HCT116 (cell line): ENCODE measurements at regions of chr4 and their contacts with region 1.

Region 1: DNA sequence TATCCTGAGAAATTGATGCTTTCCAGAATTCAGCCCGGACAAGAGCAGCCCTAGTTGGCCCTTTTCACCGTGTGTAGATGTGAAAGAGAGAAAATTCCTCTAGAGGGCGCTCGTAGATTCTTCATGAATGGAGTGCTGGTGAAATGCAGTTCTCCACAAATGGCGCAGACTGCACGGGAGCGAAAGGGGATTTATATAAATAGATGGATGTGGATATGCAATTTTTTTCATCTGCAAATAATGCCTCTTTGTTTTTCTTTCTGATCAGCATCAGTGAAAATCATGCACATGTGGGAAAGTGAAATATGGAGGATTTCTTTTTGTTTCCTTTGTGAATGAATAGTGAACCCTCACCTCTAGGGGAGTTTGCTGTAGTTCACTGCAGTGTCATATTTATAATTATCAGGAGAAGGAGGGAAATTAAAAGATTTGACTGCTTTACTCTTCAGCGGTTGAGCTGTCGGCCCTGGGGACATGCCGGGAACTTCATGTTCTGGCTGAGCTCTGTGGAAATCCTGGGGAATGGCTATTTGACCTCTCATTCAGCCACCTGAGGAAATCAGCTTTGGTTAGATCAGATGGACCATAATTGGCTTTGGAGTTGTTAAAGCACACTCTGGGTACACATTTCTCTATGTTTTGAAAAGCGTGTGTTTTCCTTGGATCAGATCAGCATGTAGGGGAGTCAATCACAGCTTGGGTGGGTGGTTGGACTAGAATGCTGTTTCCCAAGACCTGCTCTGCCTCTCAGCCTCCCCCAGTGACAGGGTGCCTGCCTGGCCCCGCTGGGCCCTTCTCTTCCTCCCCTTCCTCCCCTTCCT is 115.0 kb upstream of the SHISA3 start:
- DNase-seq: peak; percentile 76
- ATAC-seq: peak; percentile 90
- H3K4me3 ChIP-seq: no peak overlapping the region; a peak in 1 of 4 replicates
- H3K27ac ChIP-seq: no peak overlapping the region
- H3K4me1 ChIP-seq: peaks cover 0 to 7% of the 10 kb centered on the region in 2 experiments; a peak in 1 of 4 replicates
- H3K27me3 ChIP-seq: no peaks in the 10 kb centered on the region
- CTCF ChIP-seq: peak; percentile 56 to 85 (median 81)
- POLR2A ChIP-seq: no peak
- RAD21 ChIP-seq: peak; percentile 85

Region 2: DNA sequence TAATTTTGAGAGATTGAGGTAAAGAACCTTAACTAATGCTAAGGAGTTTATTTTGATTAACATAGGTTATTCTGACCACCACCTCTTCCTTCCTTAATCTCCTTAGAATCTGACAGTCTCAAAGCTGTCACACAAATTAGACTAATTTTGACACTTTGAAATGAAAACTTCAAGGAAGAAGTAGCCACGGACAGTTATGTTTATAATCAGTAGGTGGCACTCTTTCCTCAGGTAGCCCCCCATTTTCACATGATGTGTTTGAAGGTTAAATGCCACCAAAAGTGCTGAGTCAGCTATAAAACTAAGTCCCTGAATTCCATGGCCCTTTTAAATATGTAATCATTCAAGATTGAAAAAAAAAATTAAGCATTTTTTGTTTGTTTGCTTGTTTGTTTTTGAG is 324.7 kb before region 1 on chr4:
- CTCF ChIA-PET with region 1: no interaction called
- POLR2A ChIA-PET with region 1: no interaction called
- RAD21 ChIA-PET with region 1: no interaction called
- intact Hi-C with region 1: loop called (anchors 2 kb)
- DNase-seq: peak; percentile 24
- ATAC-seq: peak; percentile 59; the same call in 1 of the 2 replicates
- H3K4me3 ChIP-seq: no peak overlapping the region
- H3K27ac ChIP-seq: no peak overlapping the region
- H3K4me1 ChIP-seq: no peaks in the 10 kb centered on the region
- H3K27me3 ChIP-seq: no peaks in the 10 kb centered on the region
- CTCF ChIP-seq: peak; percentile 30 to 64 (median 51); a peak in 5 of 6 replicates
- POLR2A ChIP-seq: no peak
- RAD21 ChIP-seq: peak; percentile 63

Region 3: GRCh38 chr4:41990365-41991111 is 291.8 kb before region 1 on chr4 and contains the start of gene SLC30A9:
- CTCF ChIA-PET with region 1: interaction called, 3 read pairs
- POLR2A ChIA-PET with region 1: no interaction called
- RAD21 ChIA-PET with region 1: no interaction called
- intact Hi-C with region 1: loop called (anchors 5 kb)
- DNase-seq: peak; percentile 92
- ATAC-seq: peak; percentile 94
- H3K4me3 ChIP-seq: peak within 1 kb of the TSS; percentile 93 to 99
- H3K27ac ChIP-seq: peak within 1 kb of the TSS; percentile 55
- H3K4me1 ChIP-seq: peaks cover 0 to 13% of the 10 kb centered on the region in 2 experiments; a peak in 2 of 4 replicates
- H3K27me3 ChIP-seq: no peaks in the 10 kb centered on the region
- CTCF ChIP-seq: peak in 2 of 3 experiments; percentile 22 to 30; a peak in 2 of 6 replicates
- POLR2A ChIP-seq: peak; percentile 68
- RAD21 ChIP-seq: no peak
- total RNA-seq, gene SLC30A9: 67.4 TPM

Region 4: GRCh38 chr4:42442601-42443000 is 160.3 kb after region 1 on chr4:
- CTCF ChIA-PET with region 1: no interaction called
- POLR2A ChIA-PET with region 1: no interaction called
- RAD21 ChIA-PET with region 1: no interaction called
- intact Hi-C with region 1: no loop called
- DNase-seq: no peak
- ATAC-seq: no peak
- H3K4me3 ChIP-seq: no peak overlapping the region
- H3K27ac ChIP-seq: no peak overlapping the region
- H3K4me1 ChIP-seq: no peaks in the 10 kb centered on the region
- H3K27me3 ChIP-seq: peaks cover 30% of the 10 kb centered on the region
- CTCF ChIP-seq: no peak
- POLR2A ChIP-seq: no peak
- RAD21 ChIP-seq: no peak

Region 5: DNA sequence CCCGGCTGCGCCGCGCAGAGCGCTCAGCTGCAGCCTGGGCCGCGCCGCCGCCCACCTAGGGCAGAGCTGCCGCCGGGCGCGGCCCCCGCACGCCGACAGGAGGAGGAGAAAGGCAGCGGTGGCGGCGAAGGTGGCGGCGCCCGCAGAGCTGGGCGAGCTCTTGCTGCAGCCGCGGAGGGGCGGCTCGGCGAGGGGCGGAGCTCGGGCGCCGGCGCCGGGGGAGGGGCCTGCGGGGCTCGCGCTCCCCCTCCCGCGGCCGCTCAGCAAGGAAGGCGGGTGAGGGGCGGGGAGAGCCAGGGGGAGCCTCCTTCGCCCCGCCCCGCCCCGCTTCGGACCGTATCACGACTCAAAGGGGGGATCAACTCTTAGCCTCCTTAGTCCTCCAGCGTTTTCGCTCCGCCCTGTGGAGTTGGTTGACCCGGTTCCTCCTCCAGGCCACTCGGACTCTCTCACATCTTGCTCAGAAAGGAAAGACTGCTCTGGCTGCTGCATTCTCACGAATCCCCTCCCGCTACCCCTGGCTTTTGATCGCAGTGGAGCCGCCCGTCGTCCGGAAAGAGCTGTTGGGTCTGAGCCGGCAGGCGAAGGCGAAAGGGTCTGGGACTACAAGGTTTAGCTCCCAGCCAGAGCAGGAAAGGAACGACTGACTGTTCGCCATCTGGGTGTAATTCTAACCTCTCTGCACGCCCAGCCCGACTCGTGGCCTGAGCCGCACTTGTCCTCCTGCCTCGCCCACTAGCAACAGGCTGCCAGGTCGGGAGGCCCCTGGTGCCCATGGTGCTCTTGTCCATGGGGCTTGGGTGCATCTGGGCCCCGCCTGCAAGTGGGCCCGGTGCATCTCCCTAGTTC is 374.9 kb after region 1 on chr4 and contains the start of gene ATP8A1:
- CTCF ChIA-PET with region 1: no interaction called
- POLR2A ChIA-PET with region 1: no interaction called
- RAD21 ChIA-PET with region 1: no interaction called
- intact Hi-C with region 1: loop called (anchors 10 kb)
- DNase-seq: peak; percentile 51
- ATAC-seq: peak; percentile 93
- H3K4me3 ChIP-seq: peak within 1 kb of the TSS; percentile 59 to 65
- H3K27ac ChIP-seq: peak within 1 kb of the TSS; percentile 25; the same call in 1 of the 2 replicates
- H3K4me1 ChIP-seq: peaks cover 9 to 22% of the 10 kb centered on the region in 2 experiments; a peak in 3 of 4 replicates
- H3K27me3 ChIP-seq: peaks cover 5% of the 10 kb centered on the region; the same call in 1 of the 2 replicates
- CTCF ChIP-seq: no peak
- POLR2A ChIP-seq: peak; percentile 64
- RAD21 ChIP-seq: no peak
- total RNA-seq, gene ATP8A1: 1.9 TPM

Region 6: GRCh38 chr4:42865572-42866189 is 583.4 kb after region 1 on chr4:
- CTCF ChIA-PET with region 1: no interaction called
- POLR2A ChIA-PET with region 1: no interaction called
- RAD21 ChIA-PET with region 1: no interaction called
- intact Hi-C with region 1: loop called (anchors 5 kb)
- DNase-seq: peak; percentile 29
- ATAC-seq: peak; percentile 44; the same call in 1 of the 2 replicates
- H3K4me3 ChIP-seq: no peak overlapping the region
- H3K27ac ChIP-seq: no peak overlapping the region
- H3K4me1 ChIP-seq: no peaks in the 10 kb centered on the region
- H3K27me3 ChIP-seq: no peaks in the 10 kb centered on the region
- CTCF ChIP-seq: peak; percentile 36 to 72 (median 57); a peak in 5 of 6 replicates
- POLR2A ChIP-seq: no peak
- RAD21 ChIP-seq: peak; percentile 56